ENCODE measurements at regions of chr2 and their contacts with region 1.

Region 1: GRCh38 chr2:127591221-127591923 is 54.6 kb upstream of the GPR17 start:
- DNase-seq: no peak
- H3K4me3 ChIP-seq: no peak overlapping the region
- H3K27me3 ChIP-seq: no peaks in the 10 kb centered on the region; the same call in 1 of the 2 replicates
- CTCF ChIP-seq: peak; percentile 100

Region 2: DNA sequence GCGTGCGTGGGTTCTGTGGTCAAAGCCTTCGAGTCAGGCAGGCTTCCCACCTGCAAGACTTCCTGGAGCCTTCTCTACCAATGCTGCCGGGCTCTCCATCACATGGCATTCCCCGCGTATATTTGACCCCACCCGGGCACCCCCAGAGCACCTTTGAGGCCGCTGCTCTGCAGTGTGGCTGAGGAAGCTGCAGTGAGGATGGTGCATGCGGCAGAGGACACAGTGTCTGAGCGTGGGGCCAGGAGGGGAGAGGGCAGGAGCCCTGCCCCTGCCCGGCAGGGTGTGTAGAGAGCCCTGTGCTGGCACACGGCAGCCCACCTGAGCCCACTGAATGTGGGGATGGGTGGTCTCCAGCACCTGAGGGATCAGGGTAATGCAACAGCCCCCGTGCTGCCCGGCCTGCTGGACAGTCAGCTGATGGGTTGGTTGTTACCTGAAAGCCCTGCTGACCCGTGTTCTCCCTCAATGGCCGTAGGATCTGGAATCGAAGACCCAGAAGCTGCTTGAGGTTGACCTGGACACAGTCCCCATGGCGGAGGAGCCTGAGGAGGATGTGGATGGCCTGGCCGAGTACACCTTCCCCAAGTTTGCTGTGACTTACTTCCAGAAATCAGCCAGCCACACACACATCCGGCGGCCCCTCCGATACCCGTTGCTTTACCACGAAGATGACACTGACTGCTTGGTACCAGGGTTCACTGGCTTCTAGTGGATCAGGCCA is 17.8 kb after region 1 on chr2:
- CTCF ChIA-PET with region 1: interaction called, 37 read pairs
- POLR2A ChIA-PET with region 1: no interaction called
- DNase-seq: no peak
- H3K4me3 ChIP-seq: no peak overlapping the region
- H3K27me3 ChIP-seq: no peaks in the 10 kb centered on the region
- CTCF ChIP-seq: no peak

Region 3: GRCh38 chr2:127637725-127638252 is 46.4 kb after region 1 on chr2:
- CTCF ChIA-PET with region 1: interaction called, 32 read pairs
- POLR2A ChIA-PET with region 1: no interaction called
- DNase-seq: peak; percentile 55
- H3K4me3 ChIP-seq: no peak overlapping the region
- H3K27me3 ChIP-seq: no peaks in the 10 kb centered on the region
- CTCF ChIP-seq: no peak

Region 4: DNA sequence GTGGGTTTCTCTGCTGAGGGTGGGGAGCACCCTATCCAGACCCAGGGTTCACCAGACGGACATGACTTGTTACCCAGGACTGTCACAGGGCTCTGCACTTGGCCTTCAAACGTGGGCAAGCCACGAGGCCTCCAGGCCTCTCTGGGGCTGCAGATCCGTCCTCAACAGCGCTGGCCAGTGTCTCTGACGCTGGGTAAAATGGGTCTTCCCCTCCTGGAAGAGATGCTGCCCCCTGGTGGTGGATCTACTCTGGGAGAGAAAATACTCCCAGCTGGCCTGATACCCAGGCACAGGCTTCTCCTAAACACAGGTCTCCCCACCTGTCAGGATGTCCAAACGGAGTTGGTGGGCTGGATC is 58.3 kb after region 1 on chr2:
- CTCF ChIA-PET with region 1: interaction called, 89 read pairs
- POLR2A ChIA-PET with region 1: no interaction called
- DNase-seq: no peak
- H3K4me3 ChIP-seq: no peak overlapping the region
- H3K27me3 ChIP-seq: no peaks in the 10 kb centered on the region
- CTCF ChIP-seq: peak; percentile 87

Region 5: DNA sequence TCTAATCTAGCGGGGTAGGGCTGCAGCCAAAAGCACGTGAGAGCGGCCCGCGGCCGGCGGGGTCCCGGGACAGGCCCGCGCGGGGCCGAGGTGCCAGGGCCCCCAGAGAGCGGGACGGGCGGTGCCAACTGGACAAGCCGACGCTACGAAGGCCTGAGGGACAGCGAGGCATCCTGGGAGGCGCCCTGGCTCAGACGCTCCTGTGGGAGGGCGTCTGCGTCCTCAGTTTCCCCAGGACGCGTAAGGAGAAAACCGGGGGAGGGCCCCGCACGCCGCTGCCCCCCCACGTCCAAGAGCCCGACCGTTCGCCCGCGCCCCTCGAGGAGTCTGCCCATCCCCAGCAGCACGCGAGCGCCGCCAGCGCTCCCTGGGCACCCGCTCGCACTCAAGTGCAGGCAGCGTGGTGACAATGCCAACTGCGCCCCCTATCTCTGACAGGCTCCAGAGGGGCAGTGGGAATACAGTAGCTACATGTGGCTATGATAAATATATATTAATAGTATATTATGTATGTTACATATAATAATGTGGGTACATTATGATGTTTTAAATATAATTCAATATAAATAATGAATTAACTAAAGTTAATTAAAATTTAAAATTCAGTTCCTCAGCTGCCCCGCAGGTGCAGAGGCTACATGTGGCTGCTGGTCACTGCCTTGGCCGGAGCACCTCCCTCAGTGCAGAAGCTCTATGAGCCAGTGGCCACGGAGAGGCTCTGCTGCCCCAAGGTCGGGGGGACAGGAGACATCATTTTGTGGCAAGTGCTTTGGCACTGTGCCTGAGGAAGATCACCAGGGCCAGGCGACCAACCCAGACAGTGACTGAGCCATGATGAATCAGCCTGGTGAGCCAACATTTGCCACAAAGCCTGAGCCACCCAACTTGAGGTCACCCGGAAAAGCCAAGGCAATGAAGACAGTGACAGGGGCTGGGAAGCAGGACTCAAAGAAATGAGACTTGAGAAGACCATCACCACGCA is 104.4 kb after region 1 on chr2:
- CTCF ChIA-PET with region 1: interaction called, 23 read pairs
- POLR2A ChIA-PET with region 1: no interaction called
- DNase-seq: no peak
- H3K4me3 ChIP-seq: peak overlapping the region; percentile 29
- H3K27me3 ChIP-seq: no peaks in the 10 kb centered on the region
- CTCF ChIP-seq: peak; percentile 65

Measured in BJ (cell line).